Common myeloid progenitor, CD34-positive (primary cell): ENCODE measurements at regions of chr12 and their contacts with region 1.

Region 1: GRCh38 chr12:56189176-56189917 is at the start of gene SMARCC2:
- DNase-seq: peak; percentile 86 to 89 (median 87)
- H3K4me3 ChIP-seq: peak within 1 kb of the TSS; percentile 65 to 95 (median 88)
- H3K27ac ChIP-seq: peak within 1 kb of the TSS; percentile 66 to 87
- H3K4me1 ChIP-seq: peaks cover 8 to 36% (median 30%) of the 10 kb centered on the region in 4 experiments
- H3K27me3 ChIP-seq: no peaks in the 10 kb centered on the region

Region 2: DNA sequence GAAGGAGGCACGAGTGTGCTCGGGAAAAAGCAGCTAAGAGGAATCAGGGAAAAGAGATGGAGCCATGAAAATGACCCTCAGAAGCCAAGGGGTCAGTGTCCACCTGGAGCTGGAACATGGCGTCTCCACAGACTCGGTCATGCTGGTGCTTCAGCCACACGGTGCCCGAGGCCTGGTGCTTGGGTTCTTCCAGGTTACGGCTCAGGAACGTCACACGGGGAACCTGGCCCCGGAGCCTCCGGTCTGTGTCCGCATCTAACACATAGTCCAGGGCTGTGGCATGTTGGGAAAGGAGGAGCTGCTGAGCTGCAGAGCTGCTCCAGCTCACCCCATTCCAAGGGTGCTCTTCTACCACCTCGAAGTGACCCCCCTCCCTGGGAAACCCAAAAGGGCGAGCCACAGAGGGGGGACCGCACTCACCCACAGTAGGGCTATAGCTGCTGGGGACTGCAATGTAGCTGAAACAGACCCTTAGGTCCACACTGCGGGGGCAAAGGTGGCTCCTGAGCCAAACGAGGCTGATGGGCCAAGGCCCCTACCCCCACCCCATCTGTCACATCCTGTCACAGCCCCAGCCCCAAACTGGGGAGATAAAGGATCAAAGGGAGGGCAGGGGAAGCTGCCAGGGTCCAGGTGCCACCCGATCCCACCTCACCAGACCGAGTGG is 492.4 kb before region 1 on chr12:
- CTCF ChIA-PET with region 1: no interaction called
- POLR2A ChIA-PET with region 1: no interaction called
- DNase-seq: no peak
- H3K4me3 ChIP-seq: no peak overlapping the region
- H3K27ac ChIP-seq: no peak overlapping the region
- H3K4me1 ChIP-seq: peaks cover 0 to 7% (median 1%) of the 10 kb centered on the region in 4 experiments
- H3K27me3 ChIP-seq: no peaks in the 10 kb centered on the region

Region 3: DNA sequence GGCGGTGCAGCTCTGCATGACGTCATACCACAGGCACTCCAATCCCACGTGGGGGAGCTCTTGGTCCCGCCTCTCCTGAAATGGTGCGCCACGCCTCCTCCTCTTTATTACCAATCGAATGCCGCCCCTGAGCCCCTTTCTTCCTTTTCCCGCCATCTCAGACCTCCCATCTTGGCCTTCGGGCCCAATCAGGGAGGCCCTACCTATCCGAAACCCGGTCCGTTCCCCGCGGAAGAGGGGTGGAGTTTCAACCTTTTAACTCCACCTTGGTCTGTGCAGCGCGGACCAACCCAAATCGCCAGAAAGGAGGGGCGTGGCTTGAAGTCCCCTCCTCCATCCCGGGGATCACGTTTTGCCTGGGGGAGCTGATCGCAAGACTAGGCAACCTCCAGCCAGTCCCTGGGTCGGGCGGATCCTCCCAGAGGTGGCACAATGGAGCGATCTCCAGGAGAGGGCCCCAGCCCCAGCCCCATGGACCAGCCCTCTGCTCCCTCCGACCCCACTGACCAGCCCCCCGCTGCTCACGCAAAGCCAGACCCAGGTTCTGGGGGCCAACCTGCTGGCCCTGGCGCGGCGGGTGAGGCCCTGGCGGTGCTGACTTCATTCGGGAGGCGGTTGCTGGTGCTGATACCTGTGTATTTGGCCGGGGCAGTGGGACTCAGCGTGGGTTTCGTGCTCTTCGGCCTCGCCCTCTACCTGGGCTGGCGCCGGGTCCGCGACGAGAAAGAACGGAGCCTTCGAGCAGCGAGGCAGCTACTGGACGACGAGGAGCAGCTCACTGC is 61.3 kb before region 1 on chr12 and contains the start of gene ESYT1:
- CTCF ChIA-PET with region 1: interaction called, 198 read pairs
- POLR2A ChIA-PET with region 1: interaction called, 11 read pairs
- DNase-seq: peak; percentile 100
- H3K4me3 ChIP-seq: peak within 1 kb of the TSS; percentile 83 to 97 (median 90)
- H3K27ac ChIP-seq: peak within 1 kb of the TSS; percentile 78 to 91
- H3K4me1 ChIP-seq: peaks cover 26 to 68% (median 64%) of the 10 kb centered on the region in 4 experiments
- H3K27me3 ChIP-seq: no peaks in the 10 kb centered on the region

Region 4: DNA sequence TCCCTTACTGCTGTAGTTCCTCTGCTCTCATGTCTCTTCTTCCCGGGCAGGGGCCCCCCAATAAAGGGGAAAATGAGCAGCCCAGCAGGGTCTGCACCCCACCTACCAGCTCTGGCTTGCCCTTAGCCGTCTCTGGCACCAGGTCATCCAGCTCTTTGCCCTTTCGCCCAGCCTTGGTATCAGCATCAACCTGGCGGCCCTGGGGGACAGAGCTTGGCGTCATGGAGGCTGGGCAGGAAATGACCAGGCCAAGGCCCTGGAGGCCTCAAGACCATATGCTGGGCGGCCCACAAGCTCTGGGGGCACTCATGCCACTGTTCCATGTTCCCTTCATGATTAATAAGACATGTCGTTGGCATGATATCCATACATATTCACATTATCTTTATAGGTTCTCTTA is 16.5 kb before region 1 on chr12:
- CTCF ChIA-PET with region 1: interaction called, 16 read pairs
- POLR2A ChIA-PET with region 1: interaction called, 3 read pairs
- DNase-seq: no peak
- H3K4me3 ChIP-seq: no peak overlapping the region
- H3K27ac ChIP-seq: no peak overlapping the region
- H3K4me1 ChIP-seq: no peaks in the 10 kb centered on the region
- H3K27me3 ChIP-seq: no peaks in the 10 kb centered on the region

Region 5: DNA sequence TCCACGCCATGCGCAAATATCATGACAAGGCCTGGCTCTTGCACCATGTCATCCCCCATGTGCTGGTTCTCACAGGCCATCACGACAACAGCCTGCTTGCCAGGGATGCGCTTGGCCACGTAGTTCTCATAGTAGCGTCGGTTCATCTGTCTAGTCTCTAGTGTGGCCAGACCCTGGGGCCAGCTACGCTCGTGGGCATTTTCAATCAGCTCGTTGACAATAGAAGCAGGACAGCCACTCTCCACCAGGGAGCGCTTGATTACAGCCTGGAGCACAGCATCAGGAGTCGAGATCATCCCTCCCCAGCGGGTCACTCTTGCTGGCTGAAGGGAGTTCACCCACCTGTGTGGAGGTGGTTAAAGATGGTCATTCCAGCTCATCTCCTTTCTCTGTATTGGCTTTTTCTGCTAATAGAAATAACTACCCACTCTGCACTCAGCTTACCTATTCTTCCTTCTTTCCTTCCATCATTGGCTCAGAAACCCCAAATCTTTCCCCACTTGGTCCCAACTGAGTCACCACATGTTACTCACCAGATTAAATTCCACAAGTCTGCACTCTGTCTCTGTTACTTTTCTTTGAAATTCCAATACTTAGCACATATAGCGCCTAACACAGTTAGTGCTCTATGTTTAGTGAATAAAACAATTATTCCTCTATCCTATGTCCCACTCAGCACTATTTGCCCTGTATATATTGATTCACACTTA is 17.3 kb after region 1 on chr12:
- CTCF ChIA-PET with region 1: interaction called, 42 read pairs
- POLR2A ChIA-PET with region 1: interaction called, 6 read pairs
- DNase-seq: peak in 2 of 3 donors; percentile 54 to 55
- H3K4me3 ChIP-seq: no peak overlapping the region
- H3K27ac ChIP-seq: no peak overlapping the region
- H3K4me1 ChIP-seq: peaks cover 0 to 22% (median 13%) of the 10 kb centered on the region in 4 experiments
- H3K27me3 ChIP-seq: no peaks in the 10 kb centered on the region

Region 6: GRCh38 chr12:56258057-56258819 is 68.9 kb after region 1 on chr12 and contains the start of gene ANKRD52:
- CTCF ChIA-PET with region 1: interaction called, 18 read pairs
- POLR2A ChIA-PET with region 1: interaction called, 3 read pairs
- DNase-seq: peak; percentile 77 to 88 (median 87)
- H3K4me3 ChIP-seq: peak within 1 kb of the TSS; percentile 74 to 86 (median 84)
- H3K27ac ChIP-seq: peak within 1 kb of the TSS; percentile 46 to 74
- H3K4me1 ChIP-seq: peaks cover 0 to 19% (median 15%) of the 10 kb centered on the region in 4 experiments
- H3K27me3 ChIP-seq: no peaks in the 10 kb centered on the region